Activated CD8-positive, alpha-beta T cell treated with anti-CD3 and anti-CD28 coated beads for 36 hours (primary cell): ENCODE measurements at regions of chr2 and their contacts with region 1.

Region 1: GRCh38 chr2:176126929-176127773 is 2.4 kb upstream of the HOXD8 start:
- DNase-seq: peak; percentile 81
- ATAC-seq: no peak
- H3K4me3 Mint-ChIP-seq: no peak overlapping the region
- H3K27ac Mint-ChIP-seq: no peak overlapping the region
- H3K4me1 Mint-ChIP-seq: peaks cover 26% of the 10 kb centered on the region
- H3K27me3 Mint-ChIP-seq: peaks cover 71% of the 10 kb centered on the region
- CTCF ChIP-seq: peak; percentile 90

Region 2: DNA sequence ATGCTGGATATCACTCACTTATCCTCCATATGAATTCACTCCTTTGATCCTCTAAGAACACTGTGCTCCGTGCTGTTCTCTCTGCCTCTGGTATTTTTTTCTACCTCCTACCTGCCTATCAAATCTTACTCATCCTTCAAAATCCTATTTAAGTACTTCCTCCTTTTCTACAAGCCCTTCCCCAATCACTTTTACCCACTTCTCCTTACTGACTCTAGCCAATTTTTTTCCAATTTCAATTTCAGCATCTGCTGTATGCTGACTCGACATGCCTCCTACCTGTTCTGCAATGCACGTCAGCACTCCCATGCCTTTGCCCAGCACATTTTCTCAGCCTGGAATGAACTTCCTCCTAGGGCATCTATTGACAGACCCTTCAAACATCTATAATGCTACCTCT is 87.8 kb before region 1 on chr2:
- CTCF ChIA-PET with region 1: no interaction called
- POLR2A ChIA-PET with region 1: no interaction called
- intact Hi-C with region 1: no loop called
- DNase-seq: no peak
- ATAC-seq: no peak
- H3K4me3 Mint-ChIP-seq: no peak overlapping the region
- H3K27ac Mint-ChIP-seq: no peak overlapping the region
- H3K4me1 Mint-ChIP-seq: no peaks in the 10 kb centered on the region
- H3K27me3 Mint-ChIP-seq: peaks cover 29% of the 10 kb centered on the region
- CTCF ChIP-seq: no peak

Region 3: GRCh38 chr2:176088048-176088936 is 38.9 kb before region 1 on chr2:
- CTCF ChIA-PET with region 1: interaction called, 5 read pairs
- POLR2A ChIA-PET with region 1: interaction called, 4 read pairs
- intact Hi-C with region 1: loop called (anchors 5 kb)
- DNase-seq: no peak
- ATAC-seq: peak; percentile 30
- H3K4me3 Mint-ChIP-seq: peak overlapping the region; percentile 20
- H3K27ac Mint-ChIP-seq: no peak overlapping the region
- H3K4me1 Mint-ChIP-seq: peaks cover 7% of the 10 kb centered on the region
- H3K27me3 Mint-ChIP-seq: peaks cover 85% of the 10 kb centered on the region
- CTCF ChIP-seq: no peak

Region 4: DNA sequence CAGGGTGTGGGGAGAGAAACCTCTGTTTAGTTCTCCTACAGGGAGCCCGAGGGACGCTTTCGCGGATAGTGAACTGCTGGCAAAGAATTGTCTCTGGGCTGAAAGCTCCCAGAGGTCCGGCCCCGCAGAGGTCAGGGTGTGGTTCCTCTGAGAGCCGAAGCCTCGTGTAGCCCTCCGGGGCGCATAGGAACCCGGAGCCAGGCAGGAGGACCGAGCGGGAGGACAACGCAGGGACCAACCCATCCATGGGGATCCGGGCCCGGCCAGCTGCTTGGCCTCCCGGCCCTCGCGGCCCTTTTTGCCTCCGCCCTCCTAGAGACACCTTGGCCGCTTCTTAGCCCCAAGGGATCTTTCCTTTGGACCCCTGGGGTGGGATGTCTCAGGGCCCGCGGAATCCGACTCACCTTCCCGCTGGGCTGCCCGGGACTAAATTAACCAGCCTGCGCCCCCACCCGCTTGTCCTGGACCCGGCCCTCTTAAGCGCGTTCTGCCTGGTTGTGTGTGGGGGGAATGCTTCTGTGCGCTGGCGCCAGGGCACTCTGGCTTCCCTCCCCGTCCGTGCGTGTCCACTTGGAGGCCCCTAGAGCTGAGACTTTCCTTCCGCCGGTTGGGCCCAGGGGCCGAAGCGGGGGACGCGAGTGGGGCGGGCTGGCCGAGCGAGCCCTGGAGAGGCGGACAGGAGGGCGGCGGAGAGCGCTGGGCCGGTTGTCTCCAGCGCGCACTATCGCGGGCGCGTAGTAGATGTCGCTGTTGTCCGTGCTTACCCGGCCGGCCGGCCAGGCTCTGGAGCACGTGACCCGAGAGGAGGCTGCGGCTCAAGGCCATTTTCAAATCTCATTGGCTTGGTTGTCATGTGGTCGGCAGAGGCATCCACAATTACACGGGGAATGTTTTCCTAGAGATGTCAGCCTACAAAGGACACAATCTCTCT is 11.0 kb before region 1 on chr2 and contains the start of gene HOXD10:
- CTCF ChIA-PET with region 1: interaction called, 28 read pairs
- POLR2A ChIA-PET with region 1: interaction called, 3 read pairs
- intact Hi-C with region 1: no loop called
- DNase-seq: no peak
- ATAC-seq: no peak
- H3K4me3 Mint-ChIP-seq: no peak within 1 kb of the TSS
- H3K27ac Mint-ChIP-seq: no peak within 1 kb of the TSS
- H3K4me1 Mint-ChIP-seq: peaks cover 5% of the 10 kb centered on the region
- H3K27me3 Mint-ChIP-seq: peaks cover 89% of the 10 kb centered on the region
- CTCF ChIP-seq: no peak
- total RNA-seq, gene HOXD10: not detected

Region 5: DNA sequence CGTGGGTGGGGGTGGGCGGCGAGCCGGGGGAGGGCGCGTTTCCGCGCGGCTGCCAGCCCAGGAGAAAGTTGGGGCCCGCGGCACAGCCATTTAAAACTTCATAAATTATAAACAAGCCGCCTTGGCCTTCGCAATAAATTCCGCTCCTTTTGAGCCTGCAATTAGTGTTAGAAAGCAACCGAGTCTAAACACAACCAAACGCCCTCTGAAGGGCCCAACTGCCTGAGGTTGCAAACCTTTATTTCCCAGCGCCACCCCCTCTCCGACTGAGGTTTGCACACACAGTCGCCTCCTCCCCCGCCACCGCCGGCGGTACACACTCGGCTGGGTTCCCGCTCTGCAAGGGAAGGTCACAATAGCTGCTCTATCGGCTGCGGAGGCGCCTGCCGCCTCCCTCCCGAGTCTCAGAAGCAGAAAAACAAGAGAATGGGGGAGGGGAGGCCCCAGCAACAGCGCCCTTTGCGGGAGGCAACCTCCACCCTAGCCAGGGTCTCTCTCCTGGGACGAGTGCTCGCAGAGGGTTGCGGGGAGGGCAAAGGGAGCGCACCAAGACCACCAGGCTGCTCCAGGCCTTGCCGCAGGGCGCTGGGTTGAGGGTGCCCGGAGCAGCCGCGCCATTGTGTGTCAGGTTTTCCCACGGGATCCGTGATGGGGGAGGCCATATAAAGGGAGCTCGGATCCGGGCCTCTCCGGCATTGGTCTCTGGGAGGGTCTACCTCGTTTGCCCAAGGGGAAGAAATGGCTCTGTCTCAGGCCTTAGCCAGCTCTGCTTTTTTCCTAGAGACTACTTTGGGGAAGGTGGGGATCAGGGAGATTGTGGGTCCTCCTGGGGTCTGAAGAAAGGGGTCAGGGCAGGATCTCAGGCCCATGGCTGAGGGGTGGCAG is 47.9 kb after region 1 on chr2:
- CTCF ChIA-PET with region 1: interaction called, 6 read pairs
- POLR2A ChIA-PET with region 1: no interaction called
- intact Hi-C with region 1: loop called (anchors 5 kb)
- DNase-seq: peak; percentile 66
- ATAC-seq: peak; percentile 60
- H3K4me3 Mint-ChIP-seq: no peak overlapping the region
- H3K27ac Mint-ChIP-seq: no peak overlapping the region
- H3K4me1 Mint-ChIP-seq: peaks cover 17% of the 10 kb centered on the region
- H3K27me3 Mint-ChIP-seq: peaks cover 84% of the 10 kb centered on the region
- CTCF ChIP-seq: no peak

Region 6: GRCh38 chr2:176554101-176555048 is 427.2 kb after region 1 on chr2:
- CTCF ChIA-PET with region 1: interaction called, 21 read pairs
- POLR2A ChIA-PET with region 1: no interaction called
- intact Hi-C with region 1: no loop called
- DNase-seq: peak; percentile 49
- ATAC-seq: peak; percentile 65
- H3K4me3 Mint-ChIP-seq: peak overlapping the region; percentile 77
- H3K27ac Mint-ChIP-seq: peak overlapping the region; percentile 67
- H3K4me1 Mint-ChIP-seq: peaks cover 7% of the 10 kb centered on the region
- H3K27me3 Mint-ChIP-seq: peaks cover 46% of the 10 kb centered on the region
- CTCF ChIP-seq: peak; percentile 85

Region 7: GRCh38 chr2:176814306-176815052 is 687.3 kb after region 1 on chr2:
- CTCF ChIA-PET with region 1: interaction called, 10 read pairs
- POLR2A ChIA-PET with region 1: interaction called, 3 read pairs
- intact Hi-C with region 1: no loop called
- DNase-seq: peak; percentile 16
- ATAC-seq: peak; percentile 60
- H3K4me3 Mint-ChIP-seq: no peak overlapping the region
- H3K27ac Mint-ChIP-seq: no peak overlapping the region
- H3K4me1 Mint-ChIP-seq: peaks cover 34% of the 10 kb centered on the region
- H3K27me3 Mint-ChIP-seq: no peaks in the 10 kb centered on the region
- CTCF ChIP-seq: peak; percentile 81